ENCODE measurements at regions of chr1 and their contacts with region 1.

Region 1: GRCh38 chr1:212070720-212071302 is 35.3 kb downstream of the DTL start:
- DNase-seq: no peak
- ATAC-seq: peak; percentile 71 to 77

Region 2: GRCh38 chr1:212291505-212292134 is 220.8 kb after region 1 on chr1:
- intact Hi-C with region 1: loop called (anchors 2 to 5 kb)
- DNase-seq: no peak
- ATAC-seq: peak in 1 of 2 donors; percentile 66

Region 3: GRCh38 chr1:212328248-212328647 is 257.4 kb after region 1 on chr1:
- intact Hi-C with region 1: no loop called
- DNase-seq: no peak
- ATAC-seq: peak in 1 of 2 donors; percentile 39

Region 4: GRCh38 chr1:212368073-212368484 is 297.3 kb after region 1 on chr1:
- intact Hi-C with region 1: loop called (anchors 2 to 5 kb)
- DNase-seq: no peak
- ATAC-seq: peak; percentile 78 to 89